ENCODE measurements at regions of chr15 and their contacts with region 1.

Region 1: GRCh38 chr15:88904624-88905327 is 8.4 kb downstream of the MFGE8 start:
- DNase-seq: peak; percentile 74 to 97 (median 90)

Region 2: DNA sequence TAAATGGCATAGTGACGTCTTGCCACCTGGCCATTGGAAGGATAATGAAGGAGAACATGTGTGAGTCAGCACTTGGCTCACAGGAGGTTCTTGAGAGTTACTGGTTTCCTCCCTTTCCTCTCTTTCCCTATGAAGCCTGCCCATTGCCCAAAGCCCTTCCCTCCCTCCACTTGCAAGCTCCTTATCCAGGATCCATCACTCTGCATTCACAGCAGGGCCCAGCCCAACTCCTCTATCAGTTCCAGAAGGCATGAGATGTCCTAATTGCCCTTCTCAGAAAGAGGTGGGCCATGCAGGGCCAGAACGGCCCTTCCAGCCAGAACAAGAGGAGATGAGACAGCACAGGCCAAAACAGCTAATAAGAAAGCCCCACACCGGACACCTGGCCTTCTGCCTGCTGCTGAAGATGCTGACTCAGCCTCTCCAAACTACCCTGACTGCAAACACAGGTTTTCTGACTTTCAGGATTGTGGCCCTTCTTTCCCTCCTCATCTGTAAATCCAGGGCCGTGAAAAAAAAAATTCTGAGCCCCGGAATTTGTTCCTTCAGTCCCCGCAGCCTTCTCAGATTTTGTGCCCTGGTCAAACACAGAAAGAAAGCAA is 39.2 kb before region 1 on chr15:
- intact Hi-C with region 1: no loop called
- DNase-seq: no peak

Region 3: GRCh38 chr15:88876573-88876972 is 28.2 kb before region 1 on chr15:
- intact Hi-C with region 1: no loop called
- DNase-seq: no peak

Region 4: DNA sequence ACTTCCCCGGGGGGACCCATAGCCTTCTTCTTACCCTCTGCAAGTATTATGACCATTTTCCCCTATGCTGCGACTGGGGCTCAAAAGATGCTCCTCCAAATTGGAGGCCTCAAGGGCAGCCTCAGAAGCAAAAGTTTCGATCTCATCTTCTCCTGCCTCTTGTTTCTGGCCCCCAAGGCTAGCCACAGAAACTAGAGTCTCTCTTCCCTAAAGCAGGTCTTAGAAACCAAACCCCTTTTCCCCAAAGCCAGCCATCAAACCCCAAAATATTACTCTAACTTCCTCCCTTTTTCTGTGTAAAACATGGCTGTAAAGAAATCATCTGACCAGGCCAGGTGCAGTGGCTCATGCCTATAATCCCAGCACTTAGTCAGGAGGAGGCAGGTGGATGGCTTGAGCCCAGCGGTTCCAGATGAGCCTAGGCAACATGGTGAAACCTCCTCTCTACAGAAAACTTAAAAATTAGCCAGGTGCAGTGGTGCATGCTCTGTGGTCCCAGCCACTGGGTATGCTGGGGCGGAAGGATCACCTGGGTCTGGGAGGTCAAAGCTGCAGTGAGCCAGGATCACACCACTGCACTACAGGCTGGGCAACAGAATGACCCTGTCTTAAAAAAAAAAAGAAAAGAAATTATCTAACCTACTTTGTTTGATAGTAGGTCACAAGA is 45.1 kb after region 1 on chr15:
- intact Hi-C with region 1: loop called (anchors 2 kb)
- DNase-seq: no peak

Region 5: GRCh38 chr15:89003865-89004725 is 99.3 kb after region 1 on chr15:
- intact Hi-C with region 1: loop called (anchors 2 kb)
- DNase-seq: peak in 4 of 10 donors; percentile 10 to 85 (median 30)

Region 6: GRCh38 chr15:89017370-89018066 is 112.7 kb after region 1 on chr15:
- intact Hi-C with region 1: loop called (anchors 2 kb)
- DNase-seq: peak; percentile 49 to 95 (median 76)

Region 7: DNA sequence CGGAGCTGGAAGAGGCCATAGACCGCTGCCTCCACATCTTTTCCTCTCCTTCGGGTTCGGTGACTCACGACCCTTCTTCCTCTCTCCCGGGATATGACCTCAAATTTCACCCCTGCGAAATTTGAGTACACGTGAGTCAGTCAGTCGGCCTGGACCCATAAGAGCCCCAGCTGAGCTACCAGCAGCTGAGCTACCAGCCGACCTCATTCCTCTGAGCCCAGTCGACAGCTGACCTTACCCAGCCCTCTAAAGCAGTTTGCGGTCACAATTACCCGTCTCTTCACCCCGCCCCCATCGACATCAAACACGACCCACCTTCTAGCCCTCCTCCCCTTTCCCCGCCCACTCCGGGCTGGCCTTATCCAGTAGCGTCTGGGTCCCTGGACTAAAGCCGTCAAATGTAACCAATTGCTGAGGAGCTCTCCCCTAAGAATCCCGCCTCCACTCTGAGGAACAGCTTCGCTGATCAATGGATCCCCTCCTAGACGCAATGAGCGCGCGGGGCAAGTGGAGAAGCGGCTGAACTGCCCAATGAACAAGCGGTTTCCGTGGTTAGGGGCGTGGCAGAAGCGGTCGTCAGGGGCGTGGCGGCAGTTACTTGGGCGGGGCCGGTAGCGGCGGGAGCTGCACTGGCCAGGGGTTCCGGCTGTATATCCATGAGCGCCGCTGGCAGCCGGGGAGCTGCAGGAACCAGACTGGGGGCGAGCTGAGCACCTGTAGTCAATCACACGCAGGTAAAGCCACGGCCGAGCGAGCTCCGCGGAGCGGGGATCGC is 183.2 kb after region 1 on chr15 and contains the start of gene ABHD2:
- intact Hi-C with region 1: no loop called
- DNase-seq: peak; percentile 99 to 100 (median 100)

Region 8: GRCh38 chr15:89177633-89178306 is 273.0 kb after region 1 on chr15:
- intact Hi-C with region 1: loop called (anchors 5 kb)
- DNase-seq: peak in 8 of 10 donors; percentile 59 to 93 (median 75)

Region 9: DNA sequence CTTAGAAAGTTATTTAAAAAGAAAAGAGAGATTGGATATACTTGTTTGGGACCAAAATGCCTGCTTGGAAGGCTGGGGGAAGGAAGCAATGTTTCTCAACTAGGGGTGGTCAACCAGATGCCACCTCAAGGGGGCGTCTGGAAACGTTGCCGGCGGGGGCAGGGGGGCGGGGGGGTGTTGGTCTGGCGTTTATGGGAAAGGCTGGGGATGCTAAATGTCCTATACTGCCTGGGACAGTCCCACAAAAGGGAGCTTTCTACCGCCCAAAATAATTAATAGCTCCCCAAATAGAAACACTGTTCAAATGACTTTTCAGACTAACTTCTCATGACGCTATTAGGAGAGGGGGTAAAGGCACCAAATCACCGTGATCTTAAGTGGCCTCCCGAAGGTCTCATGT is 427.7 kb after region 1 on chr15:
- intact Hi-C with region 1: no loop called
- DNase-seq: no peak

Measured in posterior cingulate gyrus (tissue), 11 donors.